CD8-positive, alpha-beta T cell (primary cell): ENCODE measurements at regions of chr1 and their contacts with region 1.

Region 1: DNA sequence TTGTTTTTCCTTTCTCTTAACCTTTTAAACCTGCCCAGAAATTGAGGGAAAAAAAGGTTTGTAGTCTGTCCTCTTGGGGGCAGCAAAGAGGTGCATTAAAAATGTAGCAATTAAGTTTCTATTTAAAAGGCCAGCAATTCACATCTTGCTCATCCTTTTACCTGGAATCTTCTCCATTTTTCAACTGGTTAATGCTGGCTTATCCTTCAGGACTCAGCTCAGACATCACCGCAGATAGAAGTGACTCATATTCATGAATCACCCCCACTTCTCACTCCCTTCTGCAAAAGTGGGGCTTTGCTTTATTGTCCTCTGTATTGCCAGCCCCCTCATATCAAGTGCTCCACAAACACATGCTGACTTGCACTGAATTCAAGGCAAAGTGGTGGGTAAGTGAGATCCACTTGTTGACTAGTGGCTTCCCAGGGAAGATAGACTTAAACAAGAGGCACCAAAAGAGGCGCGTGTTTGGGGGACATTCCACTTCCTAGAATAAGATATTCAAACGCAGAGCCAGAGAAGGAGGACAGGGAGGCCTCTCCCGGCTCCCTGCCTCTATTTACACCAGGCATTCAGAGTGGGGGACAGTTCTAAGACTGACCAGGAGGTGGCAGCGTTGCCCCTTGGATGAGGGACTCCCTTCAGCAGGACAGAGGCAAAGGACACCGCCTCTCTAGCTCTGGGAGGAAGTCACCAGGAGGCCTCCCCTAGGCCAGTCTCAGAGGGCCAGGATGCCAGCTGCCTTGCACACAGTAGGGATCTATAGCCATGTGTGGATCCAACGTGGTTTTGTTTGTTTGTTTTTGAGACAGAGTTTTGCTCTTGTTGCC is 23.2 kb upstream of the ZNF648 start:
- DNase-seq: peak; percentile 55 to 83 (median 71)
- ATAC-seq: peak; percentile 84
- H3K4me3 ChIP-seq: no peak overlapping the region
- H3K4me3 Mint-ChIP-seq: no peak overlapping the region
- H3K27ac ChIP-seq: no peak overlapping the region
- H3K27ac Mint-ChIP-seq: peak overlapping the region; percentile 37
- H3K4me1 ChIP-seq: peaks cover 28% of the 10 kb centered on the region
- H3K4me1 Mint-ChIP-seq: peaks cover 35% of the 10 kb centered on the region
- H3K27me3 ChIP-seq: no peaks in the 10 kb centered on the region
- H3K27me3 Mint-ChIP-seq: no peaks in the 10 kb centered on the region
- CTCF ChIP-seq: peak; percentile 74

Region 2: DNA sequence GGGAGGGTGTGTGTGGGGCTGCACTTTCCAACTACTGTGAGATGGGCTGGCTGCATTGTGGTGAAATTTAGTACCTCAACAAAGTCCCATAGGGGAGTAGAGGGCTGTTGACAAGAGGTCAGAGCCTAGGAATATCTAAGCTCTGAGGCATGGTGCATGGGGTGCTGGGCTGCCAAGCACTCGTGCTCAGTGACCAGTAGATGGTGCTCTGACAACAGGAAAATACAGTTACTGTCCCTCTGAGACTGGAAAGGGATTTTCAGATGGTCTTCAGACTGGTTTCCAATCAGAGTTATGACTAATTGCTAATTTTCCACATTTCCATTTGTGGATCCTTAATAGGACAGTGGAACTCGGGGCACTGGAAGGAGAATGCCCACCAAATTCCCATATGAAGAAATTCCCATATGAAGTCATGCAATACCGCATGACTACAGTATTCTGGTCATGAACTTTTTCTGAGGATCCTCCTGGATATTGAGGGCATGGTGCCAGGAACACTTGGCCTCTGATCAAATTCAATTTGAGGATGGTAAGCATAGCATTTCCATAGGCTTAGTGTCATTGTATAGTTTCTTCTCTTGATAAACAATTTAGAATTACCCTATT is 605.5 kb before region 1 on chr1:
- CTCF ChIA-PET with region 1: interaction called, 32 read pairs
- POLR2A ChIA-PET with region 1: no interaction called
- intact Hi-C with region 1: loop called in 1 of 2 experiments (anchors 1 kb)
- DNase-seq: peak in 3 of 9 experiments; percentile 13 to 59 (median 47)
- ATAC-seq: peak; percentile 42
- H3K4me3 ChIP-seq: no peak overlapping the region
- H3K4me3 Mint-ChIP-seq: no peak overlapping the region
- H3K27ac ChIP-seq: no peak overlapping the region
- H3K27ac Mint-ChIP-seq: no peak overlapping the region
- H3K4me1 ChIP-seq: peaks cover 4% of the 10 kb centered on the region
- H3K4me1 Mint-ChIP-seq: peaks cover 7% of the 10 kb centered on the region
- H3K27me3 ChIP-seq: peaks cover 4% of the 10 kb centered on the region in 2 experiments
- H3K27me3 Mint-ChIP-seq: peaks cover 38% of the 10 kb centered on the region
- CTCF ChIP-seq: peak; percentile 30

Region 3: DNA sequence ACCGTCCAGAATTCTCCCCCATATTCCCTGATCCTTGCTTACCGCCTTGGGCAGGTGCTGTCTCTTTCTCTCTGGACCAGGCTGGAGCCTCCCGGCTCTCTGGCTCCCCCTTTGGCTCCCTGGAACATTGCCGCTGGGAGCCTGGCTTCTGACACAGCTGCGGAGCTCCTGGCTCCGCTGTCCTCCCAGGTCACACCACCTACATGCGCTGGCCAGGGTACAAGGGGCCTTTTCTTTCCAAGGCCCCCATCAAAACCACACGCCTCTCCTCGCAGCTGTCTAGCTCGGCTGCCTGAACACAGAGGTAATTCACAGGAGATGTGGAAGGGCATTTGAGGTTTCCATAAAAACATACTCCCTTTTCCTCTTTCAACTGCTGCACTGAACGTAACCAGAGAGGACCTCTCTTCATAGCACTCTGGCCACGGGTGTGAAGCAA is 15.7 kb before region 1 on chr1:
- CTCF ChIA-PET with region 1: interaction called, 24 read pairs
- POLR2A ChIA-PET with region 1: no interaction called
- intact Hi-C with region 1: no loop called
- DNase-seq: peak in 3 of 9 experiments; percentile 21 to 36 (median 35)
- ATAC-seq: no peak
- H3K4me3 ChIP-seq: no peak overlapping the region
- H3K4me3 Mint-ChIP-seq: no peak overlapping the region
- H3K27ac ChIP-seq: no peak overlapping the region
- H3K27ac Mint-ChIP-seq: no peak overlapping the region
- H3K4me1 ChIP-seq: no peaks in the 10 kb centered on the region
- H3K4me1 Mint-ChIP-seq: peaks cover 3% of the 10 kb centered on the region
- H3K27me3 ChIP-seq: peaks cover 0 to 5% of the 10 kb centered on the region in 2 experiments
- H3K27me3 Mint-ChIP-seq: peaks cover 37% of the 10 kb centered on the region
- CTCF ChIP-seq: peak; percentile 30

Region 4: DNA sequence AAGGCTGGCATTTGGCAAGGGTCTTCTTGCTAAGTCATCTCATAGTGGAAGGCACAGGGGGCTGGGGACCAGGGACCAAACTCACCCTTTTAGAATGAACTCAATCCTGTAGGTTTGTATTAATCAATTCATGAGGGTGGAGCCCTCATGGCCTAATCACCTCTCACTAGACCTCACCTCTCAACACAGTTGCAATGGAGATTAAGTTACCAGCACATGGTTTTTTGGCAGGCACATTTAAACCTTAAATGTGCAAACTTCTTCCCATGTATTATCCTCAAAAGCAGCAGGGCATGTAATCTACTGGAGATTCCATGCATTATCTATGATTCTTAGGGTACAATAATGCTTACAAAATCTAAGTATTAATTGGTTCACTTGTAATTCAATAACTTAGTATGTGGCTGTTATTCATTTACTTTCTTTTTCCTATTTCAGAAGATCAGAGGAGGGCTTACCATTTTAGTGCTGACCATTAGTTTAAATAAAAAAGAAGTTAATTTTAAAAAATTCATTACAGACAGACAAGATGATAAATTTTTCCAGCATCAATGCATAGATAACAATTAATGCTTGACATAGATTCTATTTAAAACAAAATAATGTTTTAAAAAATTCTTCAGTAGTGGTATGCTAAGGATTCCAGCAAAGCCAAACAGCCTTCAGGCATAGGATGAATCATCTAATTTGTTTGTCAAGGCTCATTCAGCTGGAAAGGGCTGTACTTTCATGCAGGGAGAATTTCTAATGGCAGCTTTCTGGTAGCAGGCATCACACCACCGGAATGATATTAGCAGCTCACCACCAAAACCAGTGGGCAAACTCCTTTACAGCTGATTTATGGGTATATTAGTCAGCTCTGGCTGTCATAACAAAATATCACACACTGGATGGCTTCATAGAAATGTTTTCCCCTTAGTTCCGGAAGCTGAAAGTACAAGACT is 101.4 kb after region 1 on chr1:
- CTCF ChIA-PET with region 1: no interaction called
- POLR2A ChIA-PET with region 1: no interaction called
- intact Hi-C with region 1: no loop called
- DNase-seq: no peak
- ATAC-seq: no peak
- H3K4me3 ChIP-seq: no peak overlapping the region
- H3K4me3 Mint-ChIP-seq: no peak overlapping the region
- H3K27ac ChIP-seq: no peak overlapping the region
- H3K27ac Mint-ChIP-seq: no peak overlapping the region
- H3K4me1 ChIP-seq: no peaks in the 10 kb centered on the region
- H3K4me1 Mint-ChIP-seq: no peaks in the 10 kb centered on the region
- H3K27me3 ChIP-seq: no peaks in the 10 kb centered on the region
- H3K27me3 Mint-ChIP-seq: peaks cover 6% of the 10 kb centered on the region
- CTCF ChIP-seq: no peak

Region 5: GRCh38 chr1:182397771-182398393 is 313.2 kb after region 1 on chr1:
- CTCF ChIA-PET with region 1: interaction called, 63 read pairs
- POLR2A ChIA-PET with region 1: interaction called, 4 read pairs
- intact Hi-C with region 1: loop called (anchors 1 kb)
- DNase-seq: no peak
- ATAC-seq: no peak
- H3K4me3 ChIP-seq: no peak overlapping the region
- H3K4me3 Mint-ChIP-seq: no peak overlapping the region
- H3K27ac ChIP-seq: no peak overlapping the region
- H3K27ac Mint-ChIP-seq: no peak overlapping the region
- H3K4me1 ChIP-seq: no peaks in the 10 kb centered on the region
- H3K4me1 Mint-ChIP-seq: peaks cover 3% of the 10 kb centered on the region
- H3K27me3 ChIP-seq: peaks cover 0 to 2% of the 10 kb centered on the region in 2 experiments
- H3K27me3 Mint-ChIP-seq: peaks cover 20% of the 10 kb centered on the region
- CTCF ChIP-seq: no peak

Region 6: GRCh38 chr1:182781841-182782586 is 697.3 kb after region 1 on chr1:
- CTCF ChIA-PET with region 1: interaction called, 5 read pairs
- POLR2A ChIA-PET with region 1: no interaction called
- intact Hi-C with region 1: loop called (anchors 2 to 5 kb)
- DNase-seq: peak; percentile 39 to 77 (median 66)
- ATAC-seq: peak; percentile 80
- H3K4me3 ChIP-seq: no peak overlapping the region
- H3K4me3 Mint-ChIP-seq: no peak overlapping the region
- H3K27ac ChIP-seq: no peak overlapping the region
- H3K27ac Mint-ChIP-seq: no peak overlapping the region
- H3K4me1 ChIP-seq: no peaks in the 10 kb centered on the region
- H3K4me1 Mint-ChIP-seq: peaks cover 3% of the 10 kb centered on the region
- H3K27me3 ChIP-seq: no peaks in the 10 kb centered on the region
- H3K27me3 Mint-ChIP-seq: peaks cover 2% of the 10 kb centered on the region
- CTCF ChIP-seq: peak; percentile 62